Vagina (tissue), 2 donors: ENCODE measurements at regions of chr19 and their contacts with region 1.

Region 1: DNA sequence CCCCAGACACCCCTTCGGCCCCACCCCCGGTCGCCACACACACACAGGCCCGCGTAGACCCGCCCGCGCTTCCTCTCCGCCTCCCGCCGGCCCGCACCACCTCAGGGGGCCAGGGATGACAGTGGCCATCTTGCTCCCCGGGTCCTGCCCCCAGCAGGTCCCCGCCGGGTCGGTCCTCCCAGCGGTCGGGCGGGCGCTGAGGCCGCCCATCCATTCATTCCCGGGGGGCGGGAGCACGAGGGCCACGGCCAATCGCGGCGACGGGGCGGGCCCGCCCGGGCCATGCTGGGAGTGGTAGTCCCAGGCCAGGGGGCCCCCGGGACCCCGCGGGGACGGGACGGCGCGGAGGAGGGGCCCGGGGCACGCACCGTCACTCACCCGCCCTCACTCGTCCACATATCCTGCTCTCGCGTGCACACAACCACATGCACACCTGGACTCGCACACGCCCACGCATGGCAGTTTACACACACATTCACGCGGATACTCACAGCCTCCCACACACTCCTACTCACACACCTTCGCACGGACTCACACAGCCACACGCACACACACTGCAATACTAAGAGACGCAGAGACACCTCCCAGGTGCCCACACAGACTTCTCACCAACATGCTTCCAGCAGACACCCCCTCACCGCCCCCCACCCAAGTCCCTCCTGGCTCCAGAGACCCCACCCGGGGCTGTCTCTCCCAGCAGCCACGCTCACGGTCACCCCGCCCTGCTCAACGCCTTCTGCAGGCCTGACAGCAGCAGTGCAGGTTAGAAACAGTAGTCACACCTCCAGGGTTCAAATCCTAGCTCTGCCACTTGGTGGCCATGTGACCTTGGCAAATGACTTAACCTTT is at the start of gene DPF1:
- DNase-seq: no peak
- H3K4me3 ChIP-seq: peak within 1 kb of the TSS; percentile 28 to 36
- H3K27ac ChIP-seq: no peak within 1 kb of the TSS
- H3K4me1 ChIP-seq: peaks cover 23% of the 10 kb centered on the region
- H3K27me3 ChIP-seq: peaks cover 10% of the 10 kb centered on the region
- CTCF ChIP-seq: no peak
- POLR2A ChIP-seq: no peak
- total RNA-seq, gene DPF1: not detected

Region 2: DNA sequence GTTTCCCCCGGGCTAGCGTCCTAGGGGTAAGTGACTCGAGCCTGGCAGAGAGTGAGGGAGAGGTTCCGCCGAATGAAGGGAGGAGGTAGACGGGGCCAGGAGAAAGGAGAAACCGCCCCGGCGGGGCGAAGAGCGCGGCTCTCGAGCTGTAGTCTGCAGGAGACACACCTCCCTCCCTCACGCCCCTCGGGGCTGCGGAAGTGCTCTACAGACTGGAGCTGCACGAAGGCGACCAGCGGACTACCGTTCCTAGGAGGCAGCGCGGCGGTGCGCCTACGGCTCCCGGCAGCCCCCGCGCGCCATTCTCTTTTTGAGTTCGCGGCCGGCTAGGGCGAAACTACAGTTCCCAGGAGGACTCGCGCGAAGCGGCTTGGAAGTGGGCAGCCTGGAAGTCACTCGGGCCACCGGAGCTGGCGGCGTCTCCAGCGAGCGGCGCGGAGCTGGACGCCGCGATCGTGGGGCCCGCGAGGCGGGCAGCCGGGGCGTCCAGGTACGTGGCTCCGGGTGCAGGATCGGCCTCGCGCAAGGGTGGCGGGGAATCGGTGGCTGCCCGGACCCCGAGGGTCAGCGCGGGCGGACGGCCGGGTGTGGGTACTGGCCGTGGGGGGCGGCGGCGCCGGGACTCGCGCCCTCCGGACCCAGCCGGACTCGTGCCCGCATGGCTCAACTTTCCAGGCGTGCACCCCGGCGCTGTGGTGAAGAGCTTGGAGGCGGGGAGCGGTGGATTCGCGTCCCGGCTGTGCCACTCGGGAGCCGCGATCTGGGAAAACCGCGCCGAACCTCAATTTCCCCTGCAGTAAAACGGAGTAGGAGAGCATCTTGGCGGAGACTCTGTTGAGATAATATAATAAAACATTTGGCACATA is 317.1 kb before region 1 on chr19 and contains the start of gene SIPA1L3:
- intact Hi-C with region 1: loop called (anchors 10 kb)
- DNase-seq: peak in 1 of 2 donors; percentile 93
- H3K4me3 ChIP-seq: peak within 1 kb of the TSS; percentile 69 to 77
- H3K27ac ChIP-seq: peak within 1 kb of the TSS; percentile 72
- H3K4me1 ChIP-seq: peaks cover 16% of the 10 kb centered on the region
- H3K27me3 ChIP-seq: no peaks in the 10 kb centered on the region
- CTCF ChIP-seq: peak in 1 of 3 experiments; percentile 24
- POLR2A ChIP-seq: peak in 1 of 2 donors; percentile 47
- total RNA-seq, gene SIPA1L3: 13.0 TPM